ENCODE measurements at regions of chr11 and their contacts with region 1.

Region 1: DNA sequence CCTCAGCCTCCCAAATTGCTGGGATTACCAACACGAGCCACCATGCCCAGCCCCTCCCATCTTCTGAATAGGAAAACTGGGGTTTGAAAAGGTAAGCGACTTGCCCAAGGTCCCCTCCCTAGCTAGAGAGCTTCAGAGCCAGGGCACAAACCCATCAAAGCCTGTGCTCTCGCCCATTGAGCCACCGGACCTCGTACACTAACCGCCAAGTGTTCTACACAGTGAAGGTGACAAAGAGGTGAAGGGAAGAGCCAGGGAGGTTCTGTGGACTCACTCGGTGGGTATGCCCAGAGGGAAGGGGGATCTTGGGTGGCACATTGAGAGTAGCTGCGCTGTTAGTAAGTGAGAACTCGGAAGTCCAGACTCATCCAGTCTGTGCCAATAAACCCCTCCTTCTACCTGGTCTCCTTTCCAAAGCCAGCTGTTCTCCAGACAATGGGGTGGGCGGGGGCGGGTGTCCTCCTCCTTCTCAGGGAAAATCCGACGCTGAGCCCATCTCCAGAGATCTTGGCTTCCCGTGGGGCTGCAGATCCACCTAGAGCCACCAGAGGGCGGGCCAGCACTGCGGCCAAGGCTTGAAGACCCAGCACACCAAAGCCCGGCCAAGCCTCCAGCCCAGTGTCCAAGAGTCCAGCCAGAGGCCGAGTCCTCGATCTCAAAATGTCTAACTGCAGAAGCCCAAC is 3.2 kb upstream of the RTN4RL2 start:
- DNase-seq: peak; percentile 85
- H3K4me3 Mint-ChIP-seq: peak overlapping the region; percentile 56
- H3K27ac Mint-ChIP-seq: no peak overlapping the region
- H3K4me1 Mint-ChIP-seq: peaks cover 25% of the 10 kb centered on the region
- H3K27me3 Mint-ChIP-seq: peaks cover 27% of the 10 kb centered on the region

Region 2: DNA sequence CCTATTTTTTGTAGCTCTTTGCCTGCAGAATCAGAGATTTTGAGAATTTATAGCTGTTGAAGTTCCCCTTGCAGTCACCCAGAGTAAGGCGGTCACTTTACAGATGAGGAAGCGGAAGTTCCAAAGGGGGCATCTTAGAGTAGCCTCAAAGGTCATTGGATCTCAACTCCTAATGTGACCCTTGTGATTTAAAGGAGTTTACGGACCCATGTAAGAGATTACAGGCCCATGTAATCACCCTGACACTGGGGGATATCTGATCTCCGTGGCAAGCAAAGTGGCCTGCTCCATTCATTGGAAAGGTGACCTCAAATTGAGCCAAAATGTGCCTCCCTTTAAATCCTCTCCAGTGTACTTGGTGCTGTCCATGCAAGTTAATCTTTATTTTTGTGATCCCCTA is 103.2 kb before region 1 on chr11:
- CTCF ChIA-PET with region 1: interaction called, 14 read pairs
- intact Hi-C with region 1: no loop called
- DNase-seq: no peak
- H3K4me3 Mint-ChIP-seq: no peak overlapping the region
- H3K27ac Mint-ChIP-seq: no peak overlapping the region
- H3K4me1 Mint-ChIP-seq: peaks cover 3% of the 10 kb centered on the region
- H3K27me3 Mint-ChIP-seq: peaks cover 7% of the 10 kb centered on the region

Region 3: DNA sequence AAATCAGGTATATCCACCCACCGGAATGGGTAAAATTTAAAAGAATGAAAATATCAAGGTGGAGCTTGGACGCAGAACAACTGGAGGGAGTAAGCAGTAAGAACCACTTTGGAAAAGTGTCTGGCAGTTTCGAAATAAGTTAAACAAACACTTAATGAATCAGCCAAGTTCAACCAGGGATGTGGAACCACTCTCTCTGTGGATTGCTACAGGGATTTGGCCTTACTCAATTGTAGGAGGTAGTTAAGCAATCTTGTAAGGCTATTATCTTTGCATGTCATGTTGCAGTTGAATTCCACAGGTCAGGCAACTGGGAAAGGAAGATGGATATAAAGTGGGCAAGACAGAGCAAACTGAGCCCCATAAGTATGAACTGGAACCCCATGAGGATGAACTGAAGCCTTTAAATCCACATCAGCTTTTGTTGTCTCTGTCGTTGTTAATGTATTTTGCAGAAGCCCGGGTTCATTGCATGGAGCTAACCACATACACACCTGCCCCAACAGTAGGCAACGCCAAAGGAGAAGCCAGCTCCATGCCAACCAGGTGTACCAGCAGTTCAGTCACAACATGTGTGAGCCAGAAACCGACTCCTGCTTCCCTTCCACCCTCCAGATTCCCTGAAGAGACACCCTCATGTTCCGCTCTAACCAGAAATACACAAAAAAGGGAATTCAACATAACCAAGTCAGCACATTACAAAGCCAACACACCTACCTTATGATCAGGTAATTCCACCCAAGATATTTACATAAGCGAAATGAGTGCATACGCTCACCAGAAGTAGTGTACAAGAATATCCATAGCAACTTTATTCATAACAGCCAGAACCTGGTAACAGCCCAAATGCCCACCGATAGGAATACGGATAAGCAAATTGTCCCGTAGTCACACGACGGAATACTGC is 22.2 kb before region 1 on chr11:
- CTCF ChIA-PET with region 1: interaction called, 20 read pairs
- intact Hi-C with region 1: no loop called
- DNase-seq: no peak
- H3K4me3 Mint-ChIP-seq: no peak overlapping the region
- H3K27ac Mint-ChIP-seq: no peak overlapping the region
- H3K4me1 Mint-ChIP-seq: no peaks in the 10 kb centered on the region
- H3K27me3 Mint-ChIP-seq: no peaks in the 10 kb centered on the region

Region 4: GRCh38 chr11:57480409-57481137 is 23.5 kb after region 1 on chr11:
- CTCF ChIA-PET with region 1: interaction called, 211 read pairs
- intact Hi-C with region 1: loop called (anchors 1 kb)
- DNase-seq: peak; percentile 87
- H3K4me3 Mint-ChIP-seq: no peak overlapping the region
- H3K27ac Mint-ChIP-seq: no peak overlapping the region
- H3K4me1 Mint-ChIP-seq: peaks cover 22% of the 10 kb centered on the region
- H3K27me3 Mint-ChIP-seq: peaks cover 16% of the 10 kb centered on the region

Region 5: DNA sequence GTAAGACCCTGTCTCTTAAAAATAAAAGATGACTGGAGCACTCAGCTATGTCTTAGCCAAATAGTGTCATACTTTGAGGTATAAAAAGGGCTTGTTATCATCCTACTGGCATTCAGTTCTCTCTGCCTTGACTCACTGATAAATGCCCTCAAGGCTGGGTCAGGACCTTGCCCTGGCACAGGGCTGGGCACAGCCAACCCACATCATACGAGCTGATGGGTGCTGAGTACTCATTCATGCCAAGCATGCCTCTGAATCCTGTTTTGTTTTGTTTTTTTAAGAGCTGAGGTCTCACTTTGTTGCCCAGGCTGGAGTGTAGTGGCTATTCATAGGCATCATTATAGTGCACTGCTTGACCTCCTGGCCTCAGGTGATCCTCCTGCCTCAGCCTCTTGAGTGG is 82.2 kb after region 1 on chr11:
- CTCF ChIA-PET with region 1: no interaction called
- intact Hi-C with region 1: no loop called
- DNase-seq: no peak
- H3K4me3 Mint-ChIP-seq: no peak overlapping the region
- H3K27ac Mint-ChIP-seq: no peak overlapping the region
- H3K4me1 Mint-ChIP-seq: no peaks in the 10 kb centered on the region
- H3K27me3 Mint-ChIP-seq: no peaks in the 10 kb centered on the region

Region 6: GRCh38 chr11:57567515-57568329 is 110.6 kb after region 1 on chr11 and contains the start of gene UBE2L6:
- CTCF ChIA-PET with region 1: interaction called, 10 read pairs
- intact Hi-C with region 1: loop called (anchors 1 kb)
- DNase-seq: peak; percentile 66
- H3K4me3 Mint-ChIP-seq: peak within 1 kb of the TSS; percentile 97
- H3K27ac Mint-ChIP-seq: peak within 1 kb of the TSS; percentile 96
- H3K4me1 Mint-ChIP-seq: peaks cover 39% of the 10 kb centered on the region
- H3K27me3 Mint-ChIP-seq: no peaks in the 10 kb centered on the region
- total RNA-seq, gene UBE2L6: 187 to 194 TPM

Region 7: GRCh38 chr11:57800444-57801182 is 343.5 kb after region 1 on chr11:
- CTCF ChIA-PET with region 1: no interaction called
- intact Hi-C with region 1: loop called (anchors 2 kb)
- DNase-seq: peak; percentile 12
- H3K4me3 Mint-ChIP-seq: no peak overlapping the region
- H3K27ac Mint-ChIP-seq: peak overlapping the region; percentile 60
- H3K4me1 Mint-ChIP-seq: peaks cover 25% of the 10 kb centered on the region
- H3K27me3 Mint-ChIP-seq: no peaks in the 10 kb centered on the region